Ovary (tissue), 10 donors: ENCODE measurements at regions of chr19 and their contacts with region 1.

Region 1: GRCh38 chr19:11035441-11036377 is 53.6 kb upstream of the LDLR start:
- DNase-seq: peak; percentile 92 to 96 (median 94)
- H3K4me3 ChIP-seq: no peak overlapping the region
- H3K27ac ChIP-seq: peak overlapping the region in 1 of 2 donors; percentile 33
- H3K4me1 ChIP-seq: no peaks in the 10 kb centered on the region
- H3K27me3 ChIP-seq: no peaks in the 10 kb centered on the region
- CTCF ChIP-seq: peak; percentile 75 to 93 (median 91)
- EP300 ChIP-seq: peak; percentile 32
- POLR2A ChIP-seq: no peak

Region 2: GRCh38 chr19:10936661-10937084 is 99.0 kb before region 1 on chr19:
- intact Hi-C with region 1: loop called in 1 of 4 experiments (anchors 5 kb)
- DNase-seq: peak; percentile 54 to 71 (median 58)
- H3K4me3 ChIP-seq: peak overlapping the region; percentile 18
- H3K27ac ChIP-seq: no peak overlapping the region
- H3K4me1 ChIP-seq: no peaks in the 10 kb centered on the region
- H3K27me3 ChIP-seq: no peaks in the 10 kb centered on the region
- CTCF ChIP-seq: peak; percentile 38 to 63 (median 45)
- EP300 ChIP-seq: no peak
- POLR2A ChIP-seq: no peak

Region 3: DNA sequence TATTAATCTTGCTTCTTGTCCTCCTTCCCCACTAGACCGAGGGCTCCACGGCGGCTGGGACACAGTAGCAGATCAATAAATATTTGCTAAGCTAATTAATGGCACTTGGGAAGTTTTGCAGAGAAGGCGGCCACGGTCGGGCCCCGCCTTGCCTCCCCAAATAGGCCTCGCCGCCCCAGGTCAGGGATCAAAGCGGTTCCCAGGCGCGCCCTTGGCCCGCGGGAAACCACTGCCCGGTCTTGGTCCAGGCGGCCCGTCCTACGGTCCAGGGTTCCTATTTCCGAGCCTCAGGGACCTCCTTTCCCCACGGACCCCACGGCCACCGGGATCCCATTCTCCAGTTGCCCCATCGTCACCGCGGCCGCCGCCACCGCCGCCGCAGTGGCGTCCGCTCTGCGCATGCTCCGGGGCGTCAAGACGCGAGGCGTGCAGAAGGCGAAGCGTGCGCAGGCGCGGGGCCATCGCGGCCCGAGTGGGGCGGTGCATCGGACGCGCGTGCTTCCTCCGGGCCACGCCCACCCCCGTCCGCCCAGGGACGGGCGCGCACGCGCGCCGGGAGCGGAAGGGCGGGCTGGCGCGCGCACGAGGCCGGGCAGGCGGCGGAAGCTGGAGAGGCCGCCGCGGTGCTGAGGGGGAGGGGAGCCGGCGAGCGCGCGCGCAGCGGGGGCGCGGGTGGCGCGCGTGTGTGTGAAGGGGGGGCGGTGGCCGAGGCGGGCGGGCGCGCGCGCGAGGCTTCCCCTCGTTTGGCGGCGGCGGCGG is 75.2 kb before region 1 on chr19 and contains the start of gene SMARCA4:
- intact Hi-C with region 1: no loop called
- DNase-seq: peak; percentile 97 to 99 (median 98)
- H3K4me3 ChIP-seq: peak within 1 kb of the TSS; percentile 75
- H3K27ac ChIP-seq: peak within 1 kb of the TSS; percentile 72 to 89
- H3K4me1 ChIP-seq: peaks cover 6% of the 10 kb centered on the region
- H3K27me3 ChIP-seq: no peaks in the 10 kb centered on the region
- CTCF ChIP-seq: no peak
- EP300 ChIP-seq: no peak
- POLR2A ChIP-seq: peak; percentile 90
- total RNA-seq, gene SMARCA4: 32.7 to 96.7 (median 68.5) TPM

Region 4: GRCh38 chr19:11090054-11090900 is 54.6 kb after region 1 on chr19:
- intact Hi-C with region 1: loop called in 1 of 4 experiments (anchors 5 kb)
- DNase-seq: peak; percentile 97 to 99 (median 98)
- H3K4me3 ChIP-seq: peak overlapping the region; percentile 64
- H3K27ac ChIP-seq: peak overlapping the region; percentile 93 to 98
- H3K4me1 ChIP-seq: peaks cover 9% of the 10 kb centered on the region
- H3K27me3 ChIP-seq: no peaks in the 10 kb centered on the region
- CTCF ChIP-seq: no peak
- EP300 ChIP-seq: peak; percentile 2
- POLR2A ChIP-seq: peak; percentile 89

Region 5: DNA sequence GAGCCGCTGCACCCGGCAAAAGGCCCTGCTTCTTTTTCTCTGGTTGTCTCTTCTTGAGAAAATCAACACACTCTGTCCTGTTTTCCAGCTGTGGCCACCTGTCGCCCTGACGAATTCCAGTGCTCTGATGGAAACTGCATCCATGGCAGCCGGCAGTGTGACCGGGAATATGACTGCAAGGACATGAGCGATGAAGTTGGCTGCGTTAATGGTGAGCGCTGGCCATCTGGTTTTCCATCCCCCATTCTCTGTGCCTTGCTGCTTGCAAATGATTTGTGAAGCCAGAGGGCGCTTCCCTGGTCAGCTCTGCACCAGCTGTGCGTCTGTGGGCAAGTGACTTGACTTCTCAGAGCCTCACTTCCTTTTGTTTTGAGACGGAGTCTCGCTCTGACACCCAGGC is 70.8 kb after region 1 on chr19:
- intact Hi-C with region 1: loop called in 1 of 4 experiments (anchors 5 kb)
- DNase-seq: no peak
- H3K4me3 ChIP-seq: no peak overlapping the region
- H3K27ac ChIP-seq: no peak overlapping the region
- H3K4me1 ChIP-seq: no peaks in the 10 kb centered on the region
- H3K27me3 ChIP-seq: no peaks in the 10 kb centered on the region
- CTCF ChIP-seq: no peak
- EP300 ChIP-seq: no peak
- POLR2A ChIP-seq: no peak

Region 6: DNA sequence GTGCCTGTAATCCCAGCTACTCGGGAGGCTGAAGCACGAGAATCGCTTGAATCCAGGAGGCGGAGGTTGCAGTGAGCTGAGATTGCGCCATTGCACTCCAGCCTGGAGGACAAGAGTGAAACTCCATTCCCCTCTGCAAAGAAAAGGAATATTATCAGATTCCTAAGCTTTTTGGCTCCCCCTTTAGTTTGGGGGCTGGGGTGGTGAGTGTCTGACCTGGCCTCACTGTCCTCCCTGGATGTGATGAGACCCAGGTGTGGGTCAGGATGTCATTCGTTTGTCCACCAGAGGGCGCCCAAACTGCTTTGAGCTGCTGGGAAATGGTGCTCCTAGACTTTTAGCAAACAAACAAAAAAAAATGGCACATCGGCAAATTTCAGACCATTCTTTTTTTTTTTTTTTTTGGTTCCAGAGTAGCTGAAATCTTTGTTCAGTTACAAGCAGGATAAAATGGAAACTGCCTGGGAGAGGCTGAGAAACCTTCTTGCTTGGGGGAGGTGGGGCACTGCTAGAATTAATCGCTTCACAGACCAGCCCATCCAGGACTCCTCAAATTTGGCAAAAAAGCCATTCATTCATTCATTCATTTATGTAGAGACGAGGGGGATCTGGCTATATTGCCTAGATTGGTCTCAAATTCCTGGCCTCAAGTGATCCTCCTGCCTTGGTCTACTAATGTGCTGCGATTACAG is 90.4 kb after region 1 on chr19:
- intact Hi-C with region 1: loop called (anchors 2 to 5 kb)
- DNase-seq: peak; percentile 86 to 91 (median 89)
- H3K4me3 ChIP-seq: no peak overlapping the region
- H3K27ac ChIP-seq: peak overlapping the region in 1 of 2 donors; percentile 22
- H3K4me1 ChIP-seq: peaks cover 3% of the 10 kb centered on the region
- H3K27me3 ChIP-seq: no peaks in the 10 kb centered on the region
- CTCF ChIP-seq: peak; percentile 67 to 85 (median 79)
- EP300 ChIP-seq: no peak
- POLR2A ChIP-seq: no peak

Region 7: DNA sequence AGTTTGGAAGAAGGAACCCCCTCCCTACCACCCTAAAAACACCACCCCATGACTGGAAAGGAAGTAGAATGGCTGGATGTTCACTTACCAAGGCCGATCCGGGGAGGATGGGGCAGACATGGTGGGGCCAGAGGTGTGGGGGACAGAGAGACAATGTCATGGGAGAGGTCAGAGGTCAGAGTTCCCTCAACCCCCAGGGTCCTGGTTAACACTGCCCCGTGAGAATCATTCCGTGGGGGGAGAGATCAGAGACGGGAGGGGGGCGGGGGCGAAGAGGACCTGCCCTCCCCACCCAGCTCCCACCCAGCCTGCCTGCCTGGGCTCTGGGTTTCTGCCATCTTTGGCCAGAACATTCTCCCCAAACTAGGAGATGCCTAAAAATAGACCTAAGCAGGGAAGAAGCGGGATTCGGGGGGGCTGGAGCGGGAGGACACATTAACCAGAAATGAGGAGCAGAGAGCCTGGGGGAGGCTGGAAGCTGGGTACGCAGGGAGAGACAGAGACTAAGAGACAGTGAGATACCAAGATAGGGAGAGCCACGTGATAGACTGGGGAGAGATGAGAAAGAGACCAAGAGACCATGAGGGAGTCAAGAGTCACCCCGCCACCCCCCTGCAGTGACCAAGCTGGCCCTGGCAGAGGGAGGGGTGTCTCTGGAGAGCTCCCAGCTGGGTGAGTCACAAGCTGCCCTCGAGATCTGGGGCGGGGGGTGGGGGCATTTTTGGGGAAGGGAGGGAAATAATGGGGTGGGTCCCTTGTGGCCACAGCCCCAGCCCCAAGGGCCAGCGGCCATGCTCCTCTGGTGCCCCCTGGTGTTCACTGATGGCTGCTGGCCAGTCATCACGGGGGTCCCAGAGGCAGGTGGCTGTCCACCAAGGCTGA is 167.7 kb after region 1 on chr19:
- intact Hi-C with region 1: loop called (anchors 2 to 10 kb)
- DNase-seq: peak; percentile 92 to 96 (median 94)
- H3K4me3 ChIP-seq: no peak overlapping the region
- H3K27ac ChIP-seq: peak overlapping the region; percentile 75 to 93
- H3K4me1 ChIP-seq: peaks cover 12% of the 10 kb centered on the region
- H3K27me3 ChIP-seq: no peaks in the 10 kb centered on the region
- CTCF ChIP-seq: peak; percentile 86 to 96 (median 92)
- EP300 ChIP-seq: peak; percentile 92
- POLR2A ChIP-seq: no peak

Region 8: GRCh38 chr19:11234486-11235075 is 198.9 kb after region 1 on chr19:
- intact Hi-C with region 1: no loop called
- DNase-seq: no peak
- H3K4me3 ChIP-seq: no peak overlapping the region
- H3K27ac ChIP-seq: no peak overlapping the region
- H3K4me1 ChIP-seq: no peaks in the 10 kb centered on the region
- H3K27me3 ChIP-seq: no peaks in the 10 kb centered on the region
- CTCF ChIP-seq: no peak
- EP300 ChIP-seq: no peak
- POLR2A ChIP-seq: no peak